GM10248 (cell line): ENCODE measurements at regions of chr11 and their contacts with region 1.

Region 1: DNA sequence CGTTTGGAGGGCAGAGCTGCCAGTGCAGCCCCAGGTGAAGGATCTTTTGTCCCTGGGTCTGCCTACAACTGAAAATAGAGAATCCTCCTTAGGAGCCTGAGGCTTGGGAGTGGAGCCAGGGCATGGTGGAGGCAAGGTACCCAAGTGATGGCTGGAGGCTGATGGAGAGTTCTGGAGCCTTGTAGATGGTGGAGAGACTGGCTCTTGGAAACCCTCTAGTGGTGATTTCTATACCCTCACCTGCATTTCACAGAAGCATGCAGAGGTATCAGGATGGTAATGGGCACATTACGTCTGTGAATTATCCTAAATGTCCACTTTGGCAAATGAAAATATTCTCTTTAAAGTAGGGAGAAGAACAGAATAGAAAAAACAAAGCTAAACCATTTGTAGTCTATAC is 44.4 kb downstream of the INSC start:
- DNase-seq: peak; percentile 24
- CTCF ChIP-seq: peak; percentile 14

Region 2: GRCh38 chr11:14974515-14975251 is 184.4 kb before region 1 on chr11:
- CTCF ChIA-PET with region 1: no interaction called
- POLR2A ChIA-PET with region 1: no interaction called
- DNase-seq: peak; percentile 40
- CTCF ChIP-seq: peak; percentile 60

Region 3: GRCh38 chr11:15169815-15170551 is 10.9 kb after region 1 on chr11:
- CTCF ChIA-PET with region 1: interaction called, 16 read pairs
- POLR2A ChIA-PET with region 1: no interaction called
- DNase-seq: no peak
- CTCF ChIP-seq: no peak